Mammary epithelial cell (primary cell): ENCODE measurements at regions of chr10 and their contacts with region 1.

Region 1: GRCh38 chr10:29370097-29371092 is 81.5 kb downstream of the LYZL1 start:
- DNase-seq: peak; percentile 8
- H3K4me3 ChIP-seq: peak overlapping the region in 1 of 3 experiments; percentile 21
- H3K27ac ChIP-seq: no peak overlapping the region
- H3K4me1 ChIP-seq: peaks cover 6% of the 10 kb centered on the region
- H3K27me3 ChIP-seq: no peaks in the 10 kb centered on the region
- CTCF ChIP-seq: no peak

Region 2: GRCh38 chr10:29452546-29452945 is 82.2 kb after region 1 on chr10:
- CTCF ChIA-PET with region 1: no interaction called
- dilution Hi-C with region 1: no loop called
- in situ Hi-C with region 1: loop called in 1 of 2 experiments (anchors 5 kb)
- intact Hi-C with region 1: no loop called
- DNase-seq: no peak
- H3K4me3 ChIP-seq: no peak overlapping the region
- H3K27ac ChIP-seq: no peak overlapping the region
- H3K4me1 ChIP-seq: no peaks in the 10 kb centered on the region
- H3K27me3 ChIP-seq: no peaks in the 10 kb centered on the region
- CTCF ChIP-seq: no peak